Activated naive CD4-positive, alpha-beta T cell treated with anti-CD3 and anti-CD28 coated beads, Interleukin-2, amount 10 ng/mL, durations not matched to agents 7 days and 5 days (primary cell): ENCODE measurements at regions of chr14 and their contacts with region 1.

Region 1: DNA sequence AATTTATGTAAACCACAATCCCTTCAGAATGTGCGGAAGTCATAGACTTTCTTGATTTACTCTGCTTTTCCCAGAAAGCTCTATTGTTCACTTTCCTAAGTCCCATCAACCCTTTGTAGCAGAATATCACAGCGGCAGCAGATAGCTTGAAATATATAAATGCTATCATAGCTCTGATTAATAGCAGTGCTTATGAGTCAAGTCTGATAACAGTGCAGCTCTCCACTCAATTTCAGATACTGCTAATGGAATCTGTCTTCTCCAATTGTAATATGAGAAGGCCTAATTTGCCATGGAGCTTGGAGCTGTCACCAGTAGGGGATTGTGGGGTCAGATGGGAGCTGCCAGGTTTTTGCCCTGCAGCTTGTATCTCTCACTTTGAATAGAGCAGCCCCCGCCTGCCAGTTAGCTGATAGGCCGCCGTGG is 10.9 kb downstream of the TMEM260 start:
- DNase-seq: no peak
- H3K4me3 Mint-ChIP-seq: no peak overlapping the region
- H3K27ac Mint-ChIP-seq: no peak overlapping the region
- H3K4me1 Mint-ChIP-seq: no peaks in the 10 kb centered on the region
- H3K27me3 Mint-ChIP-seq: no peaks in the 10 kb centered on the region

Region 2: DNA sequence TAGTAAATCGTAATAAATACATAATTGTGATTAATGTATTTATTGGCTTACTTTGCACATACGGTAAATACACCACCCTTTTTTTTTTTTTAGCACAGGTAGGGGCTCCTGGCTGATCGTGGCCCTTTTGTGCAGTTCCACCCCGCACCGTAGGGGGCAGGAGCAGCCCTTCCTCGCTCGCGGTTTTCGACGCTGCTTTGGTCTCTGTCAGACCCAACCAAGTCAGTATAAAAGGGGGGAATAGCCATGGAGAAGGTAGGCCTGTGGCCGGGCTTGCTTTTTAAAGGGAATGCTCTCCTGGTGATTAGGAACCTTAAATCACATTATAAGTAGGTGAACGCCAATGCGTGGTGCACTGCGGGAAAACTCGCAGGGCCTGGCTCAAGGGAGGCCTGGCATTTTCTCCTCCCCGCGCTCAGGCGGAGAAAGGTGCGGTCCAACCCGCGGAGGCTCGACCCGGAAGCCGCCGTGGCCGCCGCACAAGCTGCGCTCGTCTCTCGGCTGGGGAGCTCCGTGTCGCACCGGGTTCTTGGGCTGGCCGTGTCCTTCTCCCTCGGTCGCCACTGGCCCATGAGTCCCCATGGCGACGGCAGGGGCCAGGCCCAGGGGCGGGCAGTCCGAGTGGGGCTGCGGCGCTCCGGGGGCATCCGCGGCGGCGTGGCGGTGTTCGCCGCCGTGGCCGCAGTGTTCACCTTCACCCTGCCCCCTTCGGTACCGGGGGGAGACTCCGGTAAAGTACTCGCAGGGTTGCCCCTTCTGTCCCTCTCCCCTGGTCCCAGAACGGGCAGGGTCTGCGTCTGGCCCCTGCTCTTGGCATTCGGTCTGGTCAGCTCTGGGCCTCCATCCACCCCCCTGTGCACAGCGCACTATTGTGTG is 11.0 kb before region 1 on chr14 and contains the start of gene TMEM260:
- CTCF ChIA-PET with region 1: interaction called, 10 read pairs
- DNase-seq: peak; percentile 91
- H3K4me3 Mint-ChIP-seq: peak within 1 kb of the TSS; percentile 85
- H3K27ac Mint-ChIP-seq: peak within 1 kb of the TSS; percentile 93
- H3K4me1 Mint-ChIP-seq: peaks cover 27% of the 10 kb centered on the region
- H3K27me3 Mint-ChIP-seq: peaks cover 14% of the 10 kb centered on the region